ENCODE measurements at regions of chr17 and their contacts with region 1.

Region 1: DNA sequence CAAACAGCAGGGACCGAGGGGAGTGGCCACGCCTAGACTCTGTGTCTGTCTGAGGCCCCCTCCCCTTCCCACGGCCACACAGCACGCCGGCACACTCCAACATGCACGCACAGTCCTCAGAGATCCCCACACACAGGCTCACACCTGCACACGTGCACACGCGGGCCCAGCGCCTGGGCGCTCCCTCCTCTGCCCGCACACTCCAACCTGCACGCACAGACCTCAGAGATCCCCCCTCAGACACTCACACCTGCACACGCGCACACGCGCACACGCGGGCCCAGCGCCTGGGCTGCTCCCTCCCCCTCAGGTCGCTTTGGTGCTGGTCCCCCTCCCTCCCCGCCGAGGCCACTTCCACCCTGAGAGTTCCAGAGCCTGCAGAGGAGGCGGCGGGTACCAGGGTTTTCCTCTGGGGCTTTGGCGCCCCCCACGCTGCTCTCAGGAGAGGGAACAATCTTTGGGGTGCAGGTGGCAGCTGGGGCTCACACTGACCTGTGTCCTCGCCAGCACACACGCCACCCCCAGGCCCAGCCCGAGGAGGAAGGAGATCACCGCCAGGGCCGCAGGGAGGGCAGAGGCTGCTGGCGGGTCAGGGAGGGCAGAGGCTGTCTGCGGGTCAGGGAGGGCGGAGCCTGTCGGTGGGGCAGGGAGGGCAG is 1.6 kb downstream of the CD7 start:
- DNase-seq: peak; percentile 64
- ATAC-seq: peak; percentile 30
- H3K4me3 Mint-ChIP-seq: no peak overlapping the region
- H3K27ac Mint-ChIP-seq: peak overlapping the region; percentile 98
- H3K4me1 Mint-ChIP-seq: peaks cover 5% of the 10 kb centered on the region
- H3K27me3 Mint-ChIP-seq: no peaks in the 10 kb centered on the region

Region 2: GRCh38 chr17:82236142-82236981 is 79.5 kb before region 1 on chr17:
- CTCF ChIA-PET with region 1: interaction called, 4 read pairs
- POLR2A ChIA-PET with region 1: interaction called, 3 read pairs
- intact Hi-C with region 1: loop called (anchors 2 kb)
- DNase-seq: peak; percentile 85
- ATAC-seq: peak; percentile 25
- H3K4me3 Mint-ChIP-seq: no peak overlapping the region
- H3K27ac Mint-ChIP-seq: no peak overlapping the region
- H3K4me1 Mint-ChIP-seq: peaks cover 46% of the 10 kb centered on the region
- H3K27me3 Mint-ChIP-seq: no peaks in the 10 kb centered on the region

Region 3: GRCh38 chr17:82292251-82293154 is 23.3 kb before region 1 on chr17:
- CTCF ChIA-PET with region 1: interaction called, 11 read pairs
- POLR2A ChIA-PET with region 1: interaction called, 94 read pairs
- intact Hi-C with region 1: loop called (anchors 1 kb)
- DNase-seq: peak; percentile 96
- ATAC-seq: peak; percentile 89
- H3K4me3 Mint-ChIP-seq: peak overlapping the region; percentile 78
- H3K27ac Mint-ChIP-seq: peak overlapping the region; percentile 85
- H3K4me1 Mint-ChIP-seq: peaks cover 71% of the 10 kb centered on the region
- H3K27me3 Mint-ChIP-seq: no peaks in the 10 kb centered on the region

Region 4: GRCh38 chr17:82297714-82298537 is 17.9 kb before region 1 on chr17:
- CTCF ChIA-PET with region 1: interaction called, 23 read pairs
- POLR2A ChIA-PET with region 1: interaction called, 94 read pairs
- intact Hi-C with region 1: loop called (anchors 1 kb)
- DNase-seq: peak; percentile 96
- ATAC-seq: peak; percentile 62
- H3K4me3 Mint-ChIP-seq: peak overlapping the region; percentile 80
- H3K27ac Mint-ChIP-seq: peak overlapping the region; percentile 100
- H3K4me1 Mint-ChIP-seq: peaks cover 70% of the 10 kb centered on the region
- H3K27me3 Mint-ChIP-seq: no peaks in the 10 kb centered on the region

Region 5: GRCh38 chr17:82303944-82304808 is 11.7 kb before region 1 on chr17:
- CTCF ChIA-PET with region 1: interaction called, 23 read pairs
- POLR2A ChIA-PET with region 1: interaction called, 94 read pairs
- intact Hi-C with region 1: loop called (anchors 1 kb)
- DNase-seq: peak; percentile 31
- ATAC-seq: no peak
- H3K4me3 Mint-ChIP-seq: peak overlapping the region; percentile 80
- H3K27ac Mint-ChIP-seq: peak overlapping the region; percentile 100
- H3K4me1 Mint-ChIP-seq: peaks cover 72% of the 10 kb centered on the region
- H3K27me3 Mint-ChIP-seq: no peaks in the 10 kb centered on the region

Measured in activated CD4-positive, alpha-beta T cell treated with anti-CD3 and anti-CD28 coated beads for 36 hours (primary cell).